Heart left ventricle (tissue), 16 donors: ENCODE measurements at regions of chr1 and their contacts with region 1.

Region 1: GRCh38 chr1:44786138-44786840 is 1.7 kb downstream of the BEST4 start:
- DNase-seq: peak; percentile 64 to 87 (median 68)
- ATAC-seq: peak; percentile 56 to 77 (median 71)
- H3K4me3 ChIP-seq: peak overlapping the region; percentile 2 to 63 (median 52)
- H3K27ac ChIP-seq: peak overlapping the region in 11 of 12 donors; percentile 11 to 68 (median 53)
- H3K4me1 ChIP-seq: peaks cover 0 to 33% (median 25%) of the 10 kb centered on the region in 12 donors
- H3K27me3 ChIP-seq: no peaks in the 10 kb centered on the region
- CTCF ChIP-seq: peak; percentile 93 to 99 (median 98)
- POLR2A ChIP-seq: no peak

Region 2: GRCh38 chr1:44826375-44827196 is 40.3 kb after region 1 on chr1:
- intact Hi-C with region 1: loop called in 2 of 10 experiments (anchors 5 to 10 kb)
- DNase-seq: peak; percentile 78 to 85 (median 81)
- ATAC-seq: peak; percentile 62 to 90 (median 84)
- H3K4me3 ChIP-seq: peak overlapping the region in 7 of 12 donors; percentile 11 to 37 (median 24)
- H3K27ac ChIP-seq: peak overlapping the region in 7 of 12 donors; percentile 19 to 76 (median 67)
- H3K4me1 ChIP-seq: peaks cover 0 to 26% (median 6%) of the 10 kb centered on the region in 12 donors
- H3K27me3 ChIP-seq: no peaks in the 10 kb centered on the region
- CTCF ChIP-seq: no peak
- POLR2A ChIP-seq: no peak

Region 3: GRCh38 chr1:44985747-44986359 is 199.6 kb after region 1 on chr1:
- intact Hi-C with region 1: loop called in 2 of 10 experiments (anchors 5 to 10 kb)
- DNase-seq: no peak
- ATAC-seq: peak in 2 of 4 donors; percentile 18 to 63
- H3K4me3 ChIP-seq: peak overlapping the region; percentile 54 to 92 (median 74)
- H3K27ac ChIP-seq: peak overlapping the region in 11 of 12 donors; percentile 39 to 84 (median 78)
- H3K4me1 ChIP-seq: peaks cover 2 to 23% (median 10%) of the 10 kb centered on the region in 12 donors
- H3K27me3 ChIP-seq: no peaks in the 10 kb centered on the region
- CTCF ChIP-seq: no peak
- POLR2A ChIP-seq: no peak